Caco-2 (cell line): ENCODE measurements at regions of chr5 and their contacts with region 1.

Region 1: GRCh38 chr5:94485067-94485466 is 133.3 kb downstream of the KIAA0825 start:
- DNase-seq: no peak
- H3K4me3 ChIP-seq: no peak overlapping the region
- H3K4me3 Mint-ChIP-seq: no peak overlapping the region
- H3K27ac Mint-ChIP-seq: no peak overlapping the region
- H3K4me1 ChIP-seq: no peaks in the 10 kb centered on the region
- H3K4me1 Mint-ChIP-seq: no peaks in the 10 kb centered on the region
- H3K27me3 ChIP-seq: no peaks in the 10 kb centered on the region; the same call in 1 of the 2 replicates
- H3K27me3 Mint-ChIP-seq: peaks cover 6% of the 10 kb centered on the region
- CTCF ChIP-seq: no peak

Region 2: DNA sequence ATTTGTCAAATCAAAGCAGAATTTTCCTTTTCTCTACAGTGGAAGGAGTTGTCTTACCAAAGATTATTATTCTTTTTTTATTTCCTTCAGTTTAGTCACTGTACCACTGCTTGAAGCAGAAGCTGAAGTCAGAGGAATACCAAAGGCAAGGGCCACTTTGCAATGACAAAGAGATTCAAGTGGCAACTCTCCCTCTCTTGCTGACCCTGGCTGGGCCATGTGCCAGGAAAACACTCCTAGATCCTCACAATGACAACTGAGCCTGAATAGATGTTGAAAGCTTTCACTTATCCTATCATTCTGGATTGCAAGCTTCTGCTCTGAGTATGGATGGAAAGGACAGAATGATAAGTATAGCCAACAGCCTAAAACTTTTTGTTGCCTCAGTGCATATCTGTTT is 1522.3 kb before region 1 on chr5:
- CTCF ChIA-PET with region 1: interaction called, 12 read pairs
- POLR2A ChIA-PET with region 1: no interaction called
- intact Hi-C with region 1: no loop called
- DNase-seq: no peak
- H3K4me3 ChIP-seq: no peak overlapping the region
- H3K4me3 Mint-ChIP-seq: no peak overlapping the region
- H3K27ac Mint-ChIP-seq: no peak overlapping the region
- H3K4me1 ChIP-seq: no peaks in the 10 kb centered on the region
- H3K4me1 Mint-ChIP-seq: no peaks in the 10 kb centered on the region
- H3K27me3 ChIP-seq: no peaks in the 10 kb centered on the region
- H3K27me3 Mint-ChIP-seq: no peaks in the 10 kb centered on the region
- CTCF ChIP-seq: no peak

Region 3: DNA sequence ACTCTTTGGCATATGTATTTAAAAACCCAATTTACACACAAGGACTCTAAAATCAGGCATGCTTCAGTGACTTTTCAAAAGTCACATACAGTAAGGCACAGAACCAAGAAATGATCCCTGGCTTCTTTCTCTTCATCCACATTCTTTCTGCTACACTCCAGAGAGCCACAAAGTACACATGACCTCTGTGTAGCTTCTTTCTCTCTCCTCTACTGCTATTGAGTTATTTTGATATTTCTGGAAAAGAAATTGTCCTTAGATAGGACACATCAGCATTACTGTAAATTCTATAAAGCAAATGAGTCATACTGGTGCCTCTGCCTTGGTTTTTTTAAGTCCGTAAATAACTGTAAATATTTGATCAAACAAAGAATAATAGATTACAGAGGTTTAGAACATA is 37.0 kb after region 1 on chr5:
- CTCF ChIA-PET with region 1: no interaction called
- POLR2A ChIA-PET with region 1: no interaction called
- intact Hi-C with region 1: no loop called
- DNase-seq: no peak
- H3K4me3 ChIP-seq: no peak overlapping the region
- H3K4me3 Mint-ChIP-seq: no peak overlapping the region
- H3K27ac Mint-ChIP-seq: no peak overlapping the region
- H3K4me1 ChIP-seq: no peaks in the 10 kb centered on the region
- H3K4me1 Mint-ChIP-seq: peaks cover 13% of the 10 kb centered on the region
- H3K27me3 ChIP-seq: no peaks in the 10 kb centered on the region
- H3K27me3 Mint-ChIP-seq: no peaks in the 10 kb centered on the region
- CTCF ChIP-seq: no peak